SK-N-SH (cell line): ENCODE measurements at regions of chr5 and their contacts with region 1.

Region 1: DNA sequence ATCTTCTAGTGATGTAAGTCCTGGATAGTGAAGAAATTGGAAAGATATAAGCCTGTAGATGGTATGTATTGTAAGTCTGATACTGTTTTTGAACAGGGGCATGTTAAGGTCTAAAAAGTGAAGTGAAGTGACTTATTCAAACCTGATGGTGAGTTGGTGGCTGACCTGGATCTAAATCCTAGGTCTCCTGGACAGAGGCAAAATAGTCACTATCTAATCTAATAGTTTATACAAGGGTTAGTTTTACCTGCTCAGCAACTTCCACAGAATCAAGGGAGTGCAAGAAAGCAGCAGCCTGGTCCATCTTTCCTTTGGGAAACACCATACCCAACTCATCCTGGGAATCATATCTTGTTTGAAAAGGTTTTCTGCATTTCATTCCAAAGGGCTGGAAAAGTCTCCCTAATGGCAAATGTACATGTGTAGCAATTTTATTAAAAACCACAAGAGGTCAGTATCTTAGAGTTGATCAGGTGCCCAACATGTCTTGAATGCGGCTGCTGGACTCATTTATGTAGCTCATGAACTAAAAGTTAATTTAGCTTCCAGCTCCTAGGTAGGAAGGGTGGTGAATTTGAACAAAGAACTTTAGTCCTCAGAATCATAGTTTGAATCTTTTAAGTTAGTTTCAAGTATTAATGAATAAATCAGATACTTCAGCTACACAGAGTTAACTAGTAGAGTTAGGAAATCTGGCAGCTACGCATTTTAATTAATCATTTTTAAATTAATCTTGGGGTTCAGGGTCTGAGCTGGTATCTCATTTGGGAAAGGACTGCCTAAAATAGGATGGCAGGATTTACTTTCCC is 26.0 kb downstream of the SKP2 start:
- DNase-seq: peak; percentile 32
- H3K4me3 ChIP-seq: no peak overlapping the region
- H3K27ac ChIP-seq: no peak overlapping the region
- H3K4me1 ChIP-seq: no peaks in the 10 kb centered on the region
- H3K27me3 ChIP-seq: no peaks in the 10 kb centered on the region
- CTCF ChIP-seq: peak; percentile 68
- EP300 ChIP-seq: no peak
- RAD21 ChIP-seq: peak; percentile 76

Region 2: DNA sequence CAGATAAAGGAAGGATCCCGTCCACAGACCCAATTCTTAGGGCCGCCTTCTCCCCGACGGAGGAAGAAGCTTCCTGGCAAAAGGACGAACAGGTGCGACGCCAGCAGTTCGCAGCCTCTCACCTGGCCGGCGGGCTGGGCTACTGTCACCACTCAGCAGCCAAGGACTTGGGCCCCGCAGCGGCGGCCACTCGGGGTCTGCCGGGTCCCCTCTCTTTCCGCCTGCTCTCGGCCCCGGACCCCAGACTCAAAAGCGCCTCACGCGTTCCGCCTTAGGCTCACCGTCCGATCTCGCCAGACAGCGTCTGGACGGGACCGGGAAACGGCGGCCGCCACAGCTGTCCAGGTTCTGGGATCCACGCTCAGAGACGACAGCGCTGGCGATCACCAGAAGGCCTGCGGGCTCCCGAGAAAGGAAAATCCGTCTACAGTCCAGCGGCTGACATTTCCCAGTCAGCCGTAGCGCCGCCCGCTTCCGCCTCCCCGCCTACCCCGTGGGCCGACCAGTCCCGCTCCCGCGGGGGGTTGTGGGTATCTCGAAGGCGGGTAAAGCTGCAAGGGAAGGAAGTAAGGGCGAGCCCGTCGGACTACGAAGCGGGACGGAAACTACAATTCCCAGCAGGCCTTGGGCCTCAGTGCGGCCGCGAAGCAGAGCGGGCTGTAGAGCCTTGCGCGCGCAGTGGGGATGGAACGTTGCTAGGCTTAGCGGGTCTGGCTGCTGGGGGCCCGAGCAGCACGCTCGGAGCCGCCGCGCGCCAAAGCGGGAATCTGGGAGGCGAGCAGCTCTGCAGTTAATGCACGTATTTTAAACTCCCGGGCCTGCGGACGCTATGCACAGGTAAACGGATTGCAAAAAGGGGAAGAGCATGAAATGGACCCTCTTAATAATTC is 26.2 kb before region 1 on chr5 and contains the starts of genes LMBRD2 and SKP2:
- CTCF ChIA-PET with region 1: interaction called, 17 read pairs
- POLR2A ChIA-PET with region 1: no interaction called
- DNase-seq: peak; percentile 95
- H3K4me3 ChIP-seq: peak within 1 kb of the TSS; percentile 84 to 99
- H3K27ac ChIP-seq: peak within 1 kb of the TSS; percentile 42 to 89
- H3K4me1 ChIP-seq: peaks cover 30 to 31% of the 10 kb centered on the region in 2 experiments
- H3K27me3 ChIP-seq: no peaks in the 10 kb centered on the region
- CTCF ChIP-seq: no peak
- EP300 ChIP-seq: peak in 1 of 2 experiments; percentile 10; a peak in 1 of 4 replicates
- RAD21 ChIP-seq: peak; percentile 5; the same call in 1 of the 2 replicates
- polyA plus RNA-seq, gene LMBRD2: 1.6 and 2.2 TPM in 2 replicates
- polyA plus RNA-seq, gene SKP2: 12.4 and 14.8 TPM in 2 replicates

Region 3: DNA sequence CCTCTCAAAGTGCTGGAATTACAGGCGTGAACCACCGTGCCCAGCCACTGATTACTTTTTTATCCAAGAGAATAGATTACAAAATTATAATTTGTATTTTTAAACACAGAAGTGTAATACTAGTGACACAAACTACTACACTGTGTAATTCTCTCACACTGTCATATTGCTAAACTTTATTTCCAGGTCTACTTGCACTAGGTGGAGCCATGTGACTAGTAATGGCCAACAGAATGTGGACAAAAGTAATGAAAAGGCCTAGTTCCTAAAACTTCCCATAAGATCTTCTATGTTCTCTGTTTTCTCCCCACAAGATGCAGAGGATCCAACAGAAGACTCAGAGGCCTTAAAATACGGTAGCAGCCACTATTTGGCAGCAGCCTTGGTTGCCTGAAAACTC is 36.5 kb after region 1 on chr5:
- CTCF ChIA-PET with region 1: interaction called, 14 read pairs
- POLR2A ChIA-PET with region 1: no interaction called
- DNase-seq: no peak
- H3K4me3 ChIP-seq: no peak overlapping the region
- H3K27ac ChIP-seq: no peak overlapping the region
- H3K4me1 ChIP-seq: peaks cover 0 to 4% of the 10 kb centered on the region in 2 experiments; a peak in 1 of 4 replicates
- H3K27me3 ChIP-seq: no peaks in the 10 kb centered on the region
- CTCF ChIP-seq: no peak
- EP300 ChIP-seq: no peak
- RAD21 ChIP-seq: peak; percentile 63

Region 4: GRCh38 chr5:36228505-36228904 is 50.6 kb after region 1 on chr5:
- CTCF ChIA-PET with region 1: no interaction called
- POLR2A ChIA-PET with region 1: no interaction called
- DNase-seq: no peak
- H3K4me3 ChIP-seq: no peak overlapping the region
- H3K27ac ChIP-seq: no peak overlapping the region
- H3K4me1 ChIP-seq: peaks cover 0 to 7% of the 10 kb centered on the region in 2 experiments; a peak in 3 of 4 replicates
- H3K27me3 ChIP-seq: no peaks in the 10 kb centered on the region
- CTCF ChIP-seq: no peak
- EP300 ChIP-seq: no peak
- RAD21 ChIP-seq: no peak

Region 5: GRCh38 chr5:36305571-36306326 is 127.8 kb after region 1 on chr5:
- CTCF ChIA-PET with region 1: interaction called, 21 read pairs
- POLR2A ChIA-PET with region 1: no interaction called
- DNase-seq: peak; percentile 42
- H3K4me3 ChIP-seq: no peak overlapping the region
- H3K27ac ChIP-seq: no peak overlapping the region
- H3K4me1 ChIP-seq: no peaks in the 10 kb centered on the region; a peak in 2 of 4 replicates
- H3K27me3 ChIP-seq: no peaks in the 10 kb centered on the region; the same call in 1 of the 2 replicates
- CTCF ChIP-seq: peak; percentile 83
- EP300 ChIP-seq: no peak
- RAD21 ChIP-seq: peak; percentile 91